Stomach (tissue), 19 donors: ENCODE measurements at regions of chr15 and their contacts with region 1.

Region 1: GRCh38 chr15:67120839-67121643 is 55.6 kb downstream of the SMAD3 start:
- DNase-seq: peak; percentile 90 to 93
- H3K4me3 ChIP-seq: peak overlapping the region; percentile 8 to 33 (median 22)
- H3K27ac ChIP-seq: peak overlapping the region; percentile 89 to 95 (median 91)
- H3K4me1 ChIP-seq: peaks cover 68 to 92% (median 81%) of the 10 kb centered on the region in 4 donors
- H3K27me3 ChIP-seq: no peaks in the 10 kb centered on the region
- CTCF ChIP-seq: no peak
- EP300 ChIP-seq: no peak
- POLR2A ChIP-seq: no peak

Region 2: DNA sequence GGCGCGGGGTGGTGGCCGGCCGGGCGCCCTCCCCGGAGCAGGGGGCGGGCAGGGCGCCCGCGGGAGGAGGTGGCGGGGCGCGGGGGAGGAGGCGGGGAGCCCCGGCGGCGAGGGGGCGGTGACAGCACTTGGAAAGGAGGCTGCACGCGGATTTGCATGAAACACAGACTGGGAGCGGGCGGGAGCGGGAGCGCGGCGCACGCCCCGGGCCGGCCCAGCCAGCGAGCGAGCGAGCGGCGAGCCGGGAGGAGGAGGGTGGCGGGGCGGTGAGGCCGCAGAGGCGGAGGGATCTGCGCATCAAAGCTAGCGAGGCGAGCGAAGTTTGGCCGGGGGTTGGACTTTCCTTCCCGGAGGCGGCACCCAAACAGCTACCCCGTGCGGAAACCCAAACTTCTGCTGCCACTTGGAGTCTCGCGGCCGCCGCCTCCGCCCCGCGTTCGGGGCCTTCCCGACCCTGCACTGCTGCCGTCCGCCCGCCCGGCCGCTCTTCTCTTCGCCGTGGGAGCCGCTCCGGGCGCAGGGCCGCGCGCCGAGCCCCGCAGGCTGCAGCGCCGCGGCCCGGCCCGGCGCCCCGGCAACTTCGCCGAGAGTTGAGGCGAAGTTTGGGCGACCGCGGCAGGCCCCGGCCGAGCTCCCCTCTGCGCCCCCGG is 55.5 kb before region 1 on chr15 and contains the start of gene SMAD3:
- intact Hi-C with region 1: loop called (anchors 10 kb)
- DNase-seq: peak; percentile 92 to 97
- H3K4me3 ChIP-seq: peak within 1 kb of the TSS; percentile 61 to 83 (median 72)
- H3K27ac ChIP-seq: peak within 1 kb of the TSS; percentile 93 to 98 (median 94)
- H3K4me1 ChIP-seq: peaks cover 59 to 72% (median 63%) of the 10 kb centered on the region in 4 donors
- H3K27me3 ChIP-seq: no peaks in the 10 kb centered on the region
- CTCF ChIP-seq: no peak
- EP300 ChIP-seq: no peak
- POLR2A ChIP-seq: peak in 1 of 4 donors; percentile 46
- total RNA-seq, gene SMAD3: 22.8 to 103 (median 48.1) TPM